Calu3 (cell line): ENCODE measurements at regions of chr6 and their contacts with region 1.

Region 1: DNA sequence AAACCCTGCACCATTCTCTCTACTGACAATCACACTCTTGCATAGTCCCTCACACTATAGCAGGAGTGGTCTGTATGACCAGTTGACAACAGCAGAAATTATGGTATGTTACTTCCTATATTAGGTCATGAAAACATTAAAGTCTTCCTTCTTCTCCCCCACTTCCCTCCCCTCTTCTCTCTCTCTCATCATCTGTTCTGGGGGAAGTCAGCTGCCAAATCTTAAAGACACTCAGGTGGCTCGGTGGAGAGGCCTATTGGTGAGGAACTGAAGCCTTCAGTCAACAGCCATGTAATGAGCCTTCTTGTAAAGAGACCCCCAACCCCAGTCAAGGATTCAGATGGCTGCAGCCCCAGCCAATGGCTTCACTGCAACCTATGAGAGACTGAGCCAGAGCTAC is 11.1 kb upstream of the TSBP1 start:
- DNase-seq: no peak
- H3K4me3 Mint-ChIP-seq: no peak overlapping the region
- H3K27ac Mint-ChIP-seq: no peak overlapping the region
- H3K4me1 Mint-ChIP-seq: peaks cover 20% of the 10 kb centered on the region
- H3K27me3 Mint-ChIP-seq: peaks cover 20% of the 10 kb centered on the region
- CTCF ChIP-seq: no peak

Region 2: GRCh38 chr6:32340242-32340641 is 42.5 kb before region 1 on chr6:
- CTCF ChIA-PET with region 1: no interaction called
- intact Hi-C with region 1: no loop called
- DNase-seq: no peak
- H3K4me3 Mint-ChIP-seq: no peak overlapping the region
- H3K27ac Mint-ChIP-seq: no peak overlapping the region
- H3K4me1 Mint-ChIP-seq: no peaks in the 10 kb centered on the region
- H3K27me3 Mint-ChIP-seq: peaks cover 28% of the 10 kb centered on the region
- CTCF ChIP-seq: no peak

Region 3: GRCh38 chr6:32741031-32741960 is 358.5 kb after region 1 on chr6 and contains the start of gene HLA-DQA2:
- CTCF ChIA-PET with region 1: interaction called, 11 read pairs
- intact Hi-C with region 1: no loop called
- DNase-seq: no peak
- H3K4me3 Mint-ChIP-seq: no peak within 1 kb of the TSS
- H3K27ac Mint-ChIP-seq: no peak within 1 kb of the TSS
- H3K4me1 Mint-ChIP-seq: no peaks in the 10 kb centered on the region
- H3K27me3 Mint-ChIP-seq: peaks cover 93% of the 10 kb centered on the region
- CTCF ChIP-seq: no peak
- total RNA-seq, gene HLA-DQA2: 2.1 and 2.4 TPM in 2 replicates